ENCODE measurements at regions of chr20 and their contacts with region 1.

Region 1: GRCh38 chr20:38748097-38748860 is at the start of gene ACTR5:
- DNase-seq: peak; percentile 95 to 99 (median 97)
- ATAC-seq: peak; percentile 91
- H3K4me3 ChIP-seq: peak within 1 kb of the TSS; percentile 75 to 86
- H3K4me3 Mint-ChIP-seq: peak within 1 kb of the TSS; percentile 98
- H3K27ac ChIP-seq: peak within 1 kb of the TSS; percentile 81 to 98
- H3K27ac Mint-ChIP-seq: peak within 1 kb of the TSS; percentile 99
- H3K4me1 ChIP-seq: peaks cover 16% of the 10 kb centered on the region
- H3K4me1 Mint-ChIP-seq: peaks cover 23% of the 10 kb centered on the region
- H3K27me3 ChIP-seq: no peaks in the 10 kb centered on the region
- H3K27me3 Mint-ChIP-seq: peaks cover 6% of the 10 kb centered on the region
- CTCF ChIP-seq: no peak
- total RNA-seq, gene ACTR5: 15.7 to 18.2 TPM

Region 2: GRCh38 chr20:38472513-38473372 is 275.5 kb before region 1 on chr20 and contains the start of gene RALGAPB:
- CTCF ChIA-PET with region 1: no interaction called
- POLR2A ChIA-PET with region 1: no interaction called
- intact Hi-C with region 1: loop called in 1 of 2 experiments (anchors 2 kb)
- DNase-seq: peak; percentile 94 to 100 (median 98)
- ATAC-seq: peak; percentile 96
- H3K4me3 ChIP-seq: peak within 1 kb of the TSS; percentile 73 to 75
- H3K4me3 Mint-ChIP-seq: peak within 1 kb of the TSS; percentile 90
- H3K27ac ChIP-seq: peak within 1 kb of the TSS; percentile 69 to 89
- H3K27ac Mint-ChIP-seq: peak within 1 kb of the TSS; percentile 92
- H3K4me1 ChIP-seq: peaks cover 33% of the 10 kb centered on the region
- H3K4me1 Mint-ChIP-seq: peaks cover 52% of the 10 kb centered on the region
- H3K27me3 ChIP-seq: no peaks in the 10 kb centered on the region
- H3K27me3 Mint-ChIP-seq: no peaks in the 10 kb centered on the region
- CTCF ChIP-seq: peak; percentile 48
- total RNA-seq, gene RALGAPB: 28.9 to 29.1 TPM

Region 3: GRCh38 chr20:38581013-38581412 is 167.3 kb before region 1 on chr20 and contains the start of gene ADIG:
- CTCF ChIA-PET with region 1: no interaction called
- POLR2A ChIA-PET with region 1: no interaction called
- intact Hi-C with region 1: no loop called
- DNase-seq: no peak
- ATAC-seq: no peak
- H3K4me3 ChIP-seq: no peak within 1 kb of the TSS
- H3K4me3 Mint-ChIP-seq: no peak within 1 kb of the TSS
- H3K27ac ChIP-seq: no peak within 1 kb of the TSS
- H3K27ac Mint-ChIP-seq: no peak within 1 kb of the TSS
- H3K4me1 ChIP-seq: no peaks in the 10 kb centered on the region
- H3K4me1 Mint-ChIP-seq: no peaks in the 10 kb centered on the region
- H3K27me3 ChIP-seq: no peaks in the 10 kb centered on the region
- H3K27me3 Mint-ChIP-seq: no peaks in the 10 kb centered on the region
- CTCF ChIP-seq: no peak
- total RNA-seq, gene ADIG: not detected

Region 4: DNA sequence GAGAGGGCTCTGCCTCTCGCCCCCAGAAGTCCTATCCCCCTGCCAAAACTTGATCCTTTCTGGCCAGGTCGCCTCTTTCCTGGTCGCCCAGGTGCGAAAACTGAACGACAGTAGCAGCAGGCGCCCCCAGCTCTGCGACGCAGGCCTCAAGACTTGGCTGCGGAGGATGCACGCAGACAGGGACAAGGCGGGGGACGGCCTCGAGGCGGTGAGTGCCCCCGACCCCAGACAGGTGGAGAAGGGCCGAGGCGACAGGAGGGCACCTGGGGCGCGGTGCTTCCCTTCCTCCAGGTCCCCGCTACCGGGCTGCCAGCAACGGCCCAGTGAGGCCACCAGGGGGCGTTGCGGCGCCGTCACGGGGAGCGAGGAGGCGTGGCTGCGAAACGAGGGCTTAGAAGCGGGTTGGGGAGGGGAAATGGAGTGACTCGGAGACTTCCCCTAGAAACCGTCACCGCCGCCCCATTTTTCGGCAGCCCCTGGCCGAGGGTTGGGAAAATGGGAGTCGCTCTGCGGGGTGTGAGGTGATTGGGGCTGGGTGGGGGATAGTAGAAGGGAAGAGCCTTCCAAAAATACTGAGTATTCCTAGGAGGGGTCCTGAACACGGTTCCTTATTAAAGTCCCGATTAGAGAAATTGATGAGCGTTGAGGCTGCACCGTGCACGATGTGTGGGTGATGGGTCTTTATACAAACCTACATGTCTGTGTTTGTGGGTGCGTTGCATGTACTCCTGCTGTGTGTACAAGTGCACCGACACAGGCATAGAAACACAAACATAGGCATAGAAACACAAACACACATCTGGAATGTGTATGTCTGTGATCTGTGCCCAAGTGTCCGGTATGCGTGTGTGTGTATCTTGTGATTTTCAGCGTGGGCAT is 102.1 kb before region 1 on chr20:
- CTCF ChIA-PET with region 1: interaction called, 110 read pairs
- POLR2A ChIA-PET with region 1: no interaction called
- intact Hi-C with region 1: loop called (anchors 1 kb)
- DNase-seq: peak; percentile 83 to 97 (median 91)
- ATAC-seq: peak; percentile 99
- H3K4me3 ChIP-seq: peak overlapping the region; percentile 13 to 25
- H3K4me3 Mint-ChIP-seq: peak overlapping the region; percentile 76
- H3K27ac ChIP-seq: no peak overlapping the region
- H3K27ac Mint-ChIP-seq: peak overlapping the region; percentile 28
- H3K4me1 ChIP-seq: peaks cover 4% of the 10 kb centered on the region
- H3K4me1 Mint-ChIP-seq: peaks cover 8% of the 10 kb centered on the region
- H3K27me3 ChIP-seq: peaks cover 8 to 11% of the 10 kb centered on the region in 2 experiments
- H3K27me3 Mint-ChIP-seq: peaks cover 30% of the 10 kb centered on the region
- CTCF ChIP-seq: peak; percentile 84

Region 5: GRCh38 chr20:38805502-38805957 is 57.3 kb after region 1 on chr20 and contains the start of gene PPP1R16B:
- CTCF ChIA-PET with region 1: interaction called, 5 read pairs
- POLR2A ChIA-PET with region 1: interaction called, 7 read pairs
- intact Hi-C with region 1: loop called (anchors 1 kb)
- DNase-seq: peak; percentile 73 to 92 (median 84)
- ATAC-seq: peak; percentile 70
- H3K4me3 ChIP-seq: peak within 1 kb of the TSS; percentile 72 to 97
- H3K4me3 Mint-ChIP-seq: peak within 1 kb of the TSS; percentile 87
- H3K27ac ChIP-seq: peak within 1 kb of the TSS; percentile 99
- H3K27ac Mint-ChIP-seq: peak within 1 kb of the TSS; percentile 93
- H3K4me1 ChIP-seq: peaks cover 47% of the 10 kb centered on the region
- H3K4me1 Mint-ChIP-seq: peaks cover 51% of the 10 kb centered on the region
- H3K27me3 ChIP-seq: no peaks in the 10 kb centered on the region
- H3K27me3 Mint-ChIP-seq: no peaks in the 10 kb centered on the region
- CTCF ChIP-seq: no peak
- total RNA-seq, gene PPP1R16B: 128 to 129 TPM

Region 6: GRCh38 chr20:38926142-38926933 is 178.1 kb after region 1 on chr20 and contains the start of gene FAM83D:
- CTCF ChIA-PET with region 1: interaction called, 4 read pairs
- POLR2A ChIA-PET with region 1: no interaction called
- intact Hi-C with region 1: loop called in 1 of 2 experiments (anchors 1 kb)
- DNase-seq: peak; percentile 77 to 96 (median 91)
- ATAC-seq: peak; percentile 93
- H3K4me3 ChIP-seq: peak within 1 kb of the TSS; percentile 52 to 78
- H3K4me3 Mint-ChIP-seq: peak within 1 kb of the TSS; percentile 79
- H3K27ac ChIP-seq: peak within 1 kb of the TSS; percentile 35 to 47
- H3K27ac Mint-ChIP-seq: peak within 1 kb of the TSS; percentile 34
- H3K4me1 ChIP-seq: peaks cover 14% of the 10 kb centered on the region
- H3K4me1 Mint-ChIP-seq: peaks cover 25% of the 10 kb centered on the region
- H3K27me3 ChIP-seq: no peaks in the 10 kb centered on the region
- H3K27me3 Mint-ChIP-seq: no peaks in the 10 kb centered on the region
- CTCF ChIP-seq: no peak
- total RNA-seq, gene FAM83D: 5.3 to 6.3 TPM

Measured in CD8-positive, alpha-beta T cell (primary cell).